Activated CD8-positive, alpha-beta T cell treated with anti-CD3 and anti-CD28 coated beads, Interleukin-2, amount 10 ng/mL, durations not matched to agents 7 days and 5 days (primary cell): ENCODE measurements at regions of chr14 and their contacts with region 1.

Region 1: DNA sequence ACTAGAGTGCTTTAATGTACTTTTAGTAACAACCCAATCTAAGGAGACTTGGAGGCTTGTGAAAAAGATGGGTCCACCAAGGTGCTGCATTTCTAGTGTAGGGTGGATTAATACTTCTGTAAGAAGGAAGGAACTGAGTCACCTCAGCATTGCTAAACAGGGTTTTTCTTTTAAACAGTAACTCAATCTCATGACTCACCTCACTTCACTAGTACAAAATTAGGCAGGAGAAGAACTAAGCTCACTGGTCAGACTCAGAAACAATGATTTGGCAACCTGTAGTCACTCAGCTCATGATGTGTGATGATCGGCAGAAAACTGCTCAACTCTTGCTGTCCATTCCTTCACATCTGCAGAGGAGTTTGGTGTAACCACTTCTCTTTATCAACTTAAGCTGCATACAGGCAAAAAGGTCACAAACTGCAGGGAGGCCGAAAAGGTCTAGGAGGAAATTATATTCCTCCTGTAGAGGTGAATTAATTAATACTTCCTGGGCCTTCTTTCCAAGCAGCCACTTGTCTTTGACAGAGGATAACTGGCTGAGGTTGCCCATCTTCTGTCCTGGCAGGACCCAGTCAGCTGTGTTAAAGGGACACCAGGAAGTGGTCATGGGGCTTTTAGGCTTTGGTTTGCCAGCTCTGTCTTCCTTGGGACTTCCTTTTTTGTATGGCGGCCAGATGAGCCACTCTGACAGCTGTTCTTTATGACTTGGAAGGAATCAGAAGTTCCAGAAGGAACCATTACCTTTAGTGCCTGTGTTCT is 466.9 kb downstream of the FUT8 start:
- DNase-seq: no peak
- ATAC-seq: peak; percentile 37
- H3K4me3 Mint-ChIP-seq: no peak overlapping the region
- H3K27ac Mint-ChIP-seq: peak overlapping the region; percentile 83
- H3K4me1 Mint-ChIP-seq: peaks cover 9% of the 10 kb centered on the region
- H3K27me3 Mint-ChIP-seq: no peaks in the 10 kb centered on the region

Region 2: DNA sequence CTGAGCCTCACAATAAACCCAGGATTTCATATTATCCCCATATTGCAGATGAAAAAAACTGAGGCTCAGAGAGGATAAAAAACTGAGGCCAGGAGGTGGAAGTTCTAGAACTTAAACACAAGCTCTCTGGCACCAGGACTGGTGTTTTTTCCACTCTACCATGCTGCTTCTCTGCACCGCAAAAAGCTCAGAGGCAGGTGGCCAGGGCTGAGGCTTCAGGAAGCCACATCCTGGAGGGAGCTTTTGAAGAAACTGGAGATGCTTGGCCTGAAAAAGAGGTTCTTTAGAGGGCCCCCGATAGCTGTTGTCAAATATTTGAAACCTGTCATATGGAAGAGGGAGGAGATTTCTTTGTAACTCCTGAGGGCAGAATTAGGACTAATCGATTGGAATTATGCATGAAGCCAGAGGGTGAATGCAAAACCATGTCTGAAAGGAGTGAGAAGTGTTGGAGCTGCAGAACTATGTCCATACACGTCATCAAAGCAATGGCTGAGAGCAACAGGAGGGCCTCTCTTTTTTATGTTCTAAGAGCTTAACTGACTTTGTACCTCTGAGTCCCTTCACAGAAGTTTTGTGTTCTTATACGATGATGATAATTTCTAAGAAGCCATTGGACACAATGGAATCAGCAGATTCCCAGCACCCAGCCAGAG is 18.3 kb before region 1 on chr14:
- CTCF ChIA-PET with region 1: interaction called, 15 read pairs
- POLR2A ChIA-PET with region 1: interaction called, 10 read pairs
- DNase-seq: peak; percentile 84
- ATAC-seq: peak; percentile 89
- H3K4me3 Mint-ChIP-seq: peak overlapping the region; percentile 59
- H3K27ac Mint-ChIP-seq: peak overlapping the region; percentile 88
- H3K4me1 Mint-ChIP-seq: peaks cover 69% of the 10 kb centered on the region
- H3K27me3 Mint-ChIP-seq: no peaks in the 10 kb centered on the region